ENCODE measurements at regions of chr6 and their contacts with region 1.

Region 1: GRCh38 chr6:41318654-41319565 is 16.5 kb upstream of the NCR2 start:
- DNase-seq: peak; percentile 70 to 90 (median 83)
- ATAC-seq: peak; percentile 100
- H3K4me3 ChIP-seq: peak overlapping the region in 1 of 2 experiments; percentile 38
- H3K4me3 Mint-ChIP-seq: peak overlapping the region; percentile 63
- H3K27ac ChIP-seq: no peak overlapping the region
- H3K27ac Mint-ChIP-seq: peak overlapping the region; percentile 71
- H3K4me1 ChIP-seq: peaks cover 13% of the 10 kb centered on the region
- H3K4me1 Mint-ChIP-seq: peaks cover 19% of the 10 kb centered on the region
- H3K27me3 ChIP-seq: no peaks in the 10 kb centered on the region
- H3K27me3 Mint-ChIP-seq: peaks cover 4% of the 10 kb centered on the region
- CTCF ChIP-seq: peak; percentile 99

Region 2: GRCh38 chr6:41072676-41073623 is 246.0 kb before region 1 on chr6 and contains the start of gene NFYA:
- CTCF ChIA-PET with region 1: interaction called, 3 read pairs
- POLR2A ChIA-PET with region 1: no interaction called
- intact Hi-C with region 1: loop called (anchors 2 to 5 kb)
- DNase-seq: peak; percentile 99 to 100 (median 100)
- ATAC-seq: peak; percentile 70
- H3K4me3 ChIP-seq: peak within 1 kb of the TSS; percentile 72 to 86
- H3K4me3 Mint-ChIP-seq: peak within 1 kb of the TSS; percentile 92
- H3K27ac ChIP-seq: peak within 1 kb of the TSS; percentile 88 to 89
- H3K27ac Mint-ChIP-seq: peak within 1 kb of the TSS; percentile 95
- H3K4me1 ChIP-seq: peaks cover 37% of the 10 kb centered on the region
- H3K4me1 Mint-ChIP-seq: peaks cover 55% of the 10 kb centered on the region
- H3K27me3 ChIP-seq: no peaks in the 10 kb centered on the region
- H3K27me3 Mint-ChIP-seq: no peaks in the 10 kb centered on the region
- CTCF ChIP-seq: peak; percentile 46
- total RNA-seq, gene NFYA: 31.7 to 32.7 TPM

Region 3: GRCh38 chr6:41167173-41167963 is 151.5 kb before region 1 on chr6:
- CTCF ChIA-PET with region 1: interaction called, 3 read pairs
- POLR2A ChIA-PET with region 1: no interaction called
- intact Hi-C with region 1: loop called in 1 of 2 experiments (anchors 1 kb)
- DNase-seq: no peak
- ATAC-seq: no peak
- H3K4me3 ChIP-seq: no peak overlapping the region
- H3K4me3 Mint-ChIP-seq: no peak overlapping the region
- H3K27ac ChIP-seq: no peak overlapping the region
- H3K27ac Mint-ChIP-seq: no peak overlapping the region
- H3K4me1 ChIP-seq: no peaks in the 10 kb centered on the region
- H3K4me1 Mint-ChIP-seq: no peaks in the 10 kb centered on the region
- H3K27me3 ChIP-seq: peaks cover 0 to 3% of the 10 kb centered on the region in 2 experiments
- H3K27me3 Mint-ChIP-seq: peaks cover 4% of the 10 kb centered on the region
- CTCF ChIP-seq: no peak

Region 4: GRCh38 chr6:41214559-41215238 is 104.2 kb before region 1 on chr6:
- CTCF ChIA-PET with region 1: no interaction called
- POLR2A ChIA-PET with region 1: no interaction called
- intact Hi-C with region 1: no loop called
- DNase-seq: no peak
- ATAC-seq: no peak
- H3K4me3 ChIP-seq: no peak overlapping the region
- H3K4me3 Mint-ChIP-seq: no peak overlapping the region
- H3K27ac ChIP-seq: no peak overlapping the region
- H3K27ac Mint-ChIP-seq: no peak overlapping the region
- H3K4me1 ChIP-seq: no peaks in the 10 kb centered on the region
- H3K4me1 Mint-ChIP-seq: peaks cover 4% of the 10 kb centered on the region
- H3K27me3 ChIP-seq: no peaks in the 10 kb centered on the region
- H3K27me3 Mint-ChIP-seq: no peaks in the 10 kb centered on the region
- CTCF ChIP-seq: no peak

Region 5: DNA sequence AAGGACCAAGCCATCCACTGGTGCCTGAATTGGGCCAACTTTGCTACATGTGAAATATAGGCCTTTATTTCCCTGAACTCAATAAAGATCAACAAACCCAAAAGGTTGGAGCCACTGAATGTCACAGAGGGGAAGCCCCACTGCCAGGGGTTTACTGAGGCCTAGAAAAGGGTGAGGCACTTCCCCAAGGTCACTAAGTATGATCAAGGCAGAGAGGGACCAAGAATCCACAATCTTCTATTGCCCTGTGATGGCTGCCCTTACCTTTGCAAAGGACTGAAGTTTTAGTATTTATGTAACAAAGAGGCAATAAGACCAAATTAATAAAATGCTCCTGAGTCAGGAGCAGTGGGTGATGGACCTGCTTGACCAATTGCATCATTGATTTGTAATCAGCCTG is 50.4 kb before region 1 on chr6:
- CTCF ChIA-PET with region 1: no interaction called
- POLR2A ChIA-PET with region 1: no interaction called
- intact Hi-C with region 1: no loop called
- DNase-seq: no peak
- ATAC-seq: no peak
- H3K4me3 ChIP-seq: no peak overlapping the region
- H3K4me3 Mint-ChIP-seq: no peak overlapping the region
- H3K27ac ChIP-seq: no peak overlapping the region
- H3K27ac Mint-ChIP-seq: no peak overlapping the region
- H3K4me1 ChIP-seq: no peaks in the 10 kb centered on the region
- H3K4me1 Mint-ChIP-seq: peaks cover 3% of the 10 kb centered on the region
- H3K27me3 ChIP-seq: no peaks in the 10 kb centered on the region
- H3K27me3 Mint-ChIP-seq: no peaks in the 10 kb centered on the region
- CTCF ChIP-seq: no peak

Region 6: DNA sequence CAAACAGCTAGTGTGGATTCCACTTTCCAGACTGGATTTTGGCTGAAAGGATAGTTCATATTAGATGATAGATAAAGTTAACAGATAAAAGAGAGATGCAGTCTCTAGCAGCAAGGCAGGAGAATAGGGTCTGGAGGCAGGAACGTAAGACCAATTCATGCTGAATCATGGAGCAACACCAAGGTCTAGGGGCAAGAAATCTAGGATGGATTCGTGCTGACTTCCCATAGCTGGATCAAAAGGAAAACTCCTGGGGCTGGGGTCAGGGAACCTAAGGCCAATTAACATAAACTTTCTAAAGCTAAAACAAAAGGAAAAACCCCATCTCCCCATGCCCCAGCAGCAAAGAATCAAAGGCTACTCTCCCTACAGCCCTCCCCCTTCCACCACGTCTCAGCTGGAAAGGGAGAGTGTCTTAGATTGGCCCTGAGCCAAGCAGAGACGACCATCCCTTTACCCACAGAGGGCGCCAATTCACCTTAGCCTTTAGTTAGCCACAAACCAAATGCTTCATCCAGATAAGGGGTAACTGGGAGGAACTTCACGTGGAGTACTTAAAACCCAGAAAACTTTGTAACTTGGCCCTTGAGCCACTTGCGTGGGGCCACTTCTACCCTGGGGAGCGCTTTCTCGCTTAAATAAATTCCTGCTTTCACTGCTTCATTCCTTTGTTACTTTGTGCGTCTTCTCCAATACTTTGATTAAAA is 40.1 kb before region 1 on chr6:
- CTCF ChIA-PET with region 1: interaction called, 36 read pairs
- POLR2A ChIA-PET with region 1: no interaction called
- intact Hi-C with region 1: loop called (anchors 1 kb)
- DNase-seq: peak; percentile 35 to 84 (median 63)
- ATAC-seq: peak; percentile 73
- H3K4me3 ChIP-seq: no peak overlapping the region
- H3K4me3 Mint-ChIP-seq: no peak overlapping the region
- H3K27ac ChIP-seq: no peak overlapping the region
- H3K27ac Mint-ChIP-seq: no peak overlapping the region
- H3K4me1 ChIP-seq: peaks cover 8% of the 10 kb centered on the region
- H3K4me1 Mint-ChIP-seq: peaks cover 10% of the 10 kb centered on the region
- H3K27me3 ChIP-seq: no peaks in the 10 kb centered on the region
- H3K27me3 Mint-ChIP-seq: peaks cover 7% of the 10 kb centered on the region
- CTCF ChIP-seq: peak; percentile 47

Region 7: GRCh38 chr6:41334482-41335040 is 15.7 kb after region 1 on chr6:
- CTCF ChIA-PET with region 1: interaction called, 59 read pairs
- POLR2A ChIA-PET with region 1: interaction called, 15 read pairs
- intact Hi-C with region 1: no loop called
- DNase-seq: peak in 2 of 9 experiments; percentile 47 to 62
- ATAC-seq: no peak
- H3K4me3 ChIP-seq: no peak overlapping the region
- H3K4me3 Mint-ChIP-seq: peak overlapping the region; percentile 69
- H3K27ac ChIP-seq: peak overlapping the region; percentile 47 to 87
- H3K27ac Mint-ChIP-seq: peak overlapping the region; percentile 98
- H3K4me1 ChIP-seq: peaks cover 57% of the 10 kb centered on the region
- H3K4me1 Mint-ChIP-seq: peaks cover 64% of the 10 kb centered on the region
- H3K27me3 ChIP-seq: no peaks in the 10 kb centered on the region
- H3K27me3 Mint-ChIP-seq: no peaks in the 10 kb centered on the region
- CTCF ChIP-seq: no peak

Region 8: DNA sequence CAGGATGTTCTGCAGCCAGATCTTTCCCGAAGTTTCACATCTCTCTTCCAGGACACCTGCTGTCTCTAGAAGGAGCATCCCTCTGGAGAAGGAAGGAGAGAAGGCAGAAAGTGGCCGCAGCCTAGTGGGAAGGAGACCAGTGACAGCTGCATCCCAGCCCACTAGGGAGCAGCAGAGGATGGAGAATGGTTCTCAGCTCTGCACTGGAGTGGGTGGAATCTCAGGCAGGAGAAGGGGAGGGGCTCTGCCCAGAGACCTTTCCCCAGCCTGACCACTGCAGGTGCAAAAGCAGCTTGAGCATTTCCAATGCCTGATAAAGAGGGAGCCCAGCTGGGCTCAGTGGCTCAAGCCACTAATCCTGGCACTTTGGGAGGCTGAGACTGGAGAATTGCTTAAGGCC is 48.8 kb after region 1 on chr6:
- CTCF ChIA-PET with region 1: interaction called, 18 read pairs
- POLR2A ChIA-PET with region 1: no interaction called
- intact Hi-C with region 1: no loop called
- DNase-seq: peak in 1 of 9 experiments; percentile 42
- ATAC-seq: no peak
- H3K4me3 ChIP-seq: no peak overlapping the region
- H3K4me3 Mint-ChIP-seq: no peak overlapping the region
- H3K27ac ChIP-seq: no peak overlapping the region
- H3K27ac Mint-ChIP-seq: no peak overlapping the region
- H3K4me1 ChIP-seq: peaks cover 16% of the 10 kb centered on the region
- H3K4me1 Mint-ChIP-seq: peaks cover 24% of the 10 kb centered on the region
- H3K27me3 ChIP-seq: peaks cover 21 to 35% of the 10 kb centered on the region in 2 experiments
- H3K27me3 Mint-ChIP-seq: peaks cover 25% of the 10 kb centered on the region
- CTCF ChIP-seq: no peak

Region 9: DNA sequence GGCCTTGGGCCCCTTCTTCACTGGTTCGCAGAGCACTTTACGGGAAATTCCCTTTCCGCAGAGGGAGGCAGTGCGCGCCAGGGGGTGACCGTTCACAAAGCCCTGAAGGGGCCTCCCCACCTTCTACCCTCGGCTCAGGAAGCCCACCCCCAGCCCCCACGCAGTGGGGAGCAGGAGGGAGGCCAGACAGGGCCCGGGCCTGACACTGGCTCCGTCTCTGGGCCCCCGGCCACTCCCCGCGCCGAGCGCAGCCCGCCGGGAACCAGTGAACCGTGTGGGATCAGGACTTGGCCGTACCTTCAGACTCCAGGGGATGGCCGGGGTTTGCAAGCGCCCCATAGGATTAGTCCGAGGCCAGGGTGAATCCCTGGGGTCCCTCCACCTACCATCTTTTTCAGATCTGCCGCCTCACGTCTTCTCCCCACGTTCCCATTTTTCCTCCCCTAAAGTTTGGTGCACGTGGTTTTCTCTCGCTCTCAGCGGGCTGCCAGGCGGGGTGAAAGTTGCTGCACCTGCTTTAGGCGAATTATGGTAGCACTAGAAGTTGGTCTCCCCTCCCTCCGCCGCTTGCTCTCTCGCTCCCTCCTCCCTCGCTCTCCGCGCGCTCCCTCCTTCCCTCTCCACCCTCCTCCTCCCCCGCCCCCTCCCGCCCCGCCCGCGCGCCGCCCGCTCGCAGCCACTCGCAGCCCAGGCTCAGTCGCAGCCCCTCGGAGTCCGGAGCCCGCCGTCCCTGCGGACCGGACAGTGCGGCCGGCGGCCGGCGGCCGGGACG is 227.0 kb after region 1 on chr6 and contains the start of gene FOXP4:
- CTCF ChIA-PET with region 1: no interaction called
- POLR2A ChIA-PET with region 1: no interaction called
- intact Hi-C with region 1: no loop called
- DNase-seq: peak; percentile 60 to 93 (median 84)
- ATAC-seq: peak; percentile 85
- H3K4me3 ChIP-seq: peak within 1 kb of the TSS; percentile 67 to 79
- H3K4me3 Mint-ChIP-seq: peak within 1 kb of the TSS; percentile 94
- H3K27ac ChIP-seq: no peak within 1 kb of the TSS
- H3K27ac Mint-ChIP-seq: peak within 1 kb of the TSS; percentile 77
- H3K4me1 ChIP-seq: peaks cover 28% of the 10 kb centered on the region
- H3K4me1 Mint-ChIP-seq: peaks cover 21% of the 10 kb centered on the region
- H3K27me3 ChIP-seq: peaks cover 18 to 20% of the 10 kb centered on the region in 2 experiments
- H3K27me3 Mint-ChIP-seq: peaks cover 16% of the 10 kb centered on the region
- CTCF ChIP-seq: no peak
- total RNA-seq, gene FOXP4: 9.9 to 11.4 TPM

Measured in CD8-positive, alpha-beta T cell (primary cell).